ENCODE measurements at regions of chr2 and their contacts with region 1.

Region 1: GRCh38 chr2:22879009-22879863 is 505.7 kb upstream of the KLHL29 start:
- DNase-seq: no peak
- ATAC-seq: no peak
- H3K4me3 ChIP-seq: no peak overlapping the region
- H3K4me3 Mint-ChIP-seq: no peak overlapping the region
- H3K27ac ChIP-seq: no peak overlapping the region
- H3K27ac Mint-ChIP-seq: no peak overlapping the region
- H3K4me1 ChIP-seq: no peaks in the 10 kb centered on the region
- H3K4me1 Mint-ChIP-seq: no peaks in the 10 kb centered on the region
- H3K27me3 ChIP-seq: no peaks in the 10 kb centered on the region
- H3K27me3 Mint-ChIP-seq: peaks cover 0 to 3% (median 0%) of the 10 kb centered on the region in 5 donors

Region 2: GRCh38 chr2:22807872-22808271 is 71.4 kb before region 1 on chr2:
- CTCF ChIA-PET with region 1: no interaction called
- POLR2A ChIA-PET with region 1: no interaction called
- intact Hi-C with region 1: loop called in 1 of 2 experiments (anchors 2 kb)
- DNase-seq: no peak
- ATAC-seq: no peak
- H3K4me3 ChIP-seq: no peak overlapping the region
- H3K4me3 Mint-ChIP-seq: no peak overlapping the region
- H3K27ac ChIP-seq: no peak overlapping the region
- H3K27ac Mint-ChIP-seq: no peak overlapping the region
- H3K4me1 ChIP-seq: no peaks in the 10 kb centered on the region
- H3K4me1 Mint-ChIP-seq: no peaks in the 10 kb centered on the region
- H3K27me3 ChIP-seq: no peaks in the 10 kb centered on the region
- H3K27me3 Mint-ChIP-seq: no peaks in the 10 kb centered on the region